ENCODE measurements at regions of chr14 and their contacts with region 1.

Region 1: DNA sequence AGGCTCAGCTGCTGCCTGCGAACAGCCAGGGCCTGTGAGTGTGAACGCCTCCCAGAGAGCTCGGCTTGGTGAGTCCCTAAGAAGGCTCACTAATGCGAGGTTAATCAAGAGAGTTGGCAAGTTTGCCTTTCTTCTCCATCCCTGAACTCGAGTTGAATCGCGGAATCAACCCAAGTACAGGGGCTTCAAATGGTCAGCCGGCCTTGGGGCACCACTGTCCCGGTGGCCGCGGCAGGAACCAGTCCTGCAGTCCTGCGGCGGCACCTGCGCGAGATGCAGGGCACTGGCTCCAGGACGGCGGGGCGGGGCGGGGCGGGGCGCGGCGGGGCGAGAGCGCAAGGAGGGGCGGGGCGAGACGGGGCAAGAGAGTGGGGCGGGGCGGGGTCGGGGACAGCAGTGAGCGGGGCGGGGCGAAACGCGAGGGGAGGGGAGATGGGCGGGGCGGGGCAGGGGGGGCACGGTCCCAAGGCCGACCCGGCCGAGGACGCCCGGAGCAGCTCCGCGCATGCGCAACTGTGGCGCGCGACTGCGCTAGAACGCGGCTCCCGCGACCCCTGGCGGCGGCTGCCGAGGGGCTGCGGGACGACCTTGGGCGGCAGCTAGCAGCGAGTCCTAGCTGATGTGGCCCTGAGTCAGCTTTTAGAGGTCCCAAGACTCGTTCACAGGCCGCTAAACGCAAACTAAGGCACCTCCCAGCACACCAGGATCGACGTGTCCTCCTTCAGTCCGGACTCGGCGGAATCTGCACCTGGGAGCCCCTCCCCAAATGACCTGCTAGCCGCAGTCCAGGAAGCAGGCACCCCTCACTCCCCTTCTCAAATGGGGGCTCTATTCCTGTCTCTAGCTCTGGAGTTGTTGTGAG is 58.0 kb downstream of the TTC7B start:
- DNase-seq: peak; percentile 94
- ATAC-seq: peak; percentile 85
- H3K4me3 Mint-ChIP-seq: peak overlapping the region; percentile 59
- H3K27ac Mint-ChIP-seq: no peak overlapping the region
- H3K4me1 Mint-ChIP-seq: peaks cover 33% of the 10 kb centered on the region
- H3K27me3 Mint-ChIP-seq: peaks cover 10% of the 10 kb centered on the region
- CTCF ChIP-seq: peak; percentile 65

Region 2: DNA sequence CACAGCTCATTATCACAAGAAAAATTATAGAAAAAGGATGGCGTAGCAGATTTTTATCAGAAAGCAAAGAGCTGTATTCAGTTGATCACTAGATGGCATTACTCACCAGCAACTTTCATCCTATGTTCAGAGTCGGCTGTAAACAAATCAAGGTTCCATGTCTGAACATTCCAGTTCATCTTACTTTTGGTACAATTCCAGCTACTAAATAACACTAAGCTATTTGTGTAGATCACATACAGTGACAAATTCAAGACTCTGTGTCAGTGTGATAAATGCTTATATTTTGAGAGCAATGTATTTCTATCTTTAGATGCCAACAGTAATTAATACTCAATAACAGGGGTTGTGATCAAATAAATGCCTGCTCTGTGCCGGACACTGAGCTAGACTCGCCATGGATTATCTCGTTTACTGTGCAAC is 456.6 kb before region 1 on chr14:
- CTCF ChIA-PET with region 1: interaction called, 21 read pairs
- POLR2A ChIA-PET with region 1: no interaction called
- DNase-seq: no peak
- ATAC-seq: no peak
- H3K4me3 Mint-ChIP-seq: no peak overlapping the region
- H3K27ac Mint-ChIP-seq: peak overlapping the region; percentile 71; the same call in 1 of the 2 replicates
- H3K4me1 Mint-ChIP-seq: peaks cover 54% of the 10 kb centered on the region
- H3K27me3 Mint-ChIP-seq: no peaks in the 10 kb centered on the region; the same call in 1 of the 2 replicates
- CTCF ChIP-seq: no peak

Region 3: GRCh38 chr14:90399541-90400444 is 358.5 kb before region 1 on chr14:
- CTCF ChIA-PET with region 1: interaction called, 15 read pairs
- POLR2A ChIA-PET with region 1: no interaction called
- DNase-seq: peak; percentile 85
- ATAC-seq: peak; percentile 62
- H3K4me3 Mint-ChIP-seq: peak overlapping the region; percentile 88
- H3K27ac Mint-ChIP-seq: peak overlapping the region; percentile 36; the same call in 1 of the 2 replicates
- H3K4me1 Mint-ChIP-seq: peaks cover 26% of the 10 kb centered on the region
- H3K27me3 Mint-ChIP-seq: peaks cover 4% of the 10 kb centered on the region; the same call in 1 of the 2 replicates
- CTCF ChIP-seq: peak; percentile 94

Region 4: DNA sequence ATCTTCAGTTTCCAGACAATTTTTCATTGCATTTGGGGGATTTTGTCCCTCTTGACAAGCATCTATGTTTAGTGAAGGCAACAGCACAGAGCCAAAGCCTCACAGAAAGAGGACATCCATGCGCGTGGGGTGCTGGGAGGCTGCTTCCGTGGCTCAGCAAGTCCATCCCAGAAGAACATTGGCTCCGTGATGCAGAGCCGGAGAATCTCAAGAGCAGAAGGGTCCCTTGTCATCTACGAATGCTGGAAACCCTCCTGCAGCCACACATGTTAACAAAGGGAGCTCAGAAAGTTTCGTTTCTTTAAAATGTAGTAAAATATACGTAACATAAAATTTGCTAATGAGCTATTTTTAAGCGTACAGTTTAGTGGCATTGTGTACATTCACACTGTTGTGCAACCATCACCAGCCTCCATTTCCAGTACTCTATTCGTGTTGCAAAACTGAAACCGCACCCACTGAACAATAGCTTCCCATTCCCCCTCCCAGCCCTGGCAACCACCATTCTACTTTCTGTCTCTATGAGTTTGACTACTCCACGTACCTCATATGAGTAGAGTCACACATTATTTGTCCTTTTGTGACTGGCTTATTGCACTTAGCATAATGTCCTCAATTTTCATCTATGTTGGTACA is 128.0 kb before region 1 on chr14:
- CTCF ChIA-PET with region 1: no interaction called
- POLR2A ChIA-PET with region 1: no interaction called
- DNase-seq: no peak
- ATAC-seq: no peak
- H3K4me3 Mint-ChIP-seq: no peak overlapping the region
- H3K27ac Mint-ChIP-seq: no peak overlapping the region
- H3K4me1 Mint-ChIP-seq: peaks cover 30% of the 10 kb centered on the region
- H3K27me3 Mint-ChIP-seq: no peaks in the 10 kb centered on the region
- CTCF ChIP-seq: no peak

Region 5: DNA sequence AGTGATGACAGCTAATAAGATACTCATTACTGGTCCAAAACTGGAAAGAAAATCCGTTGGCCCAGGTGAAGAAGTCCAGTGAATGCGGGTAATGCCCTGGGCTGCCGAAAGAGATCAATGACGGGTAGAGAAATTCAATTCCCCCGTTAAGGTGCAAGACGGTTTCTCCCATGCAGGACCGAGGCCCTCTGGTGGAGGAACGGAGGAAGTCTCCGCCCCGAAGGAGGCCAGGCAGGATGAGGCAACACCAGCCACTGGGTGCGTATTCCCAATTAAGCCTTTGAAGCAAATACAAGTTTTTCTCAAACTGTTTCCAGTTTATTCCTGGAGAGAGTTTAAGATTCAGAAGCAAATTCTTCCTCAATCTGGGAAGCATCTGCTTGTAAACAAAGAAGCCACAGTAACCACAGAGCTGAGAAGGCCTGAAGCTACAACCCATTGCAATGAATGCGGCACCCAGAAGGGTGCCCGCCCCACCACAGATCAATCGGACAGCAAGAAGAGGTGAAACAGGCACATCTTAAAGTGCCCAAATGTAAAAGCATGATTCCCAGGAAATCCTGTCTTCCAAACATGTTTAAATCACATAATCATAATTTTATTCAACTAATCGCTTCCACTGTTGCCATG is 60.6 kb before region 1 on chr14:
- CTCF ChIA-PET with region 1: interaction called, 50 read pairs
- POLR2A ChIA-PET with region 1: no interaction called
- DNase-seq: peak; percentile 87
- ATAC-seq: peak; percentile 93
- H3K4me3 Mint-ChIP-seq: no peak overlapping the region
- H3K27ac Mint-ChIP-seq: peak overlapping the region; percentile 31
- H3K4me1 Mint-ChIP-seq: peaks cover 14% of the 10 kb centered on the region
- H3K27me3 Mint-ChIP-seq: no peaks in the 10 kb centered on the region
- CTCF ChIP-seq: peak; percentile 86

Region 6: DNA sequence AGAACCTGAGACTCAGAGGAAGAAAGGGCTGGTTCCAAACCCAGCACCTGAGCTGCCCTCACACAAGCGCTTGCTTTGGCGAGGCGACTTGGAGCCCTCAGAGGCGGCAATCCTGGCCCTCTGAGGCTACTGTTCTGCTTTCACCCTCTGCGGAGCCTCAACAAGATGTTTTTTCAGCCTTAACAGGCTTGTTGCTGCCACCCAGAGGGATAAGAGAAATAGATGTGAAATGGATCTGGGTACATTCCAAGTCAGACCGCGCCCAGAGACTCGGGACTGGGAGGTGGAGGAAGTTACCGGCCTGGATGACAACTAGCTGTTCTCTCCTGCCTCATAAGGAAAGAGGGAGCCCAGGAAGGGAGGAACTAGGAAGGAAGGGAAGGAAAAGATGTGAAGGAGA is 31.6 kb before region 1 on chr14:
- CTCF ChIA-PET with region 1: interaction called, 19 read pairs
- POLR2A ChIA-PET with region 1: interaction called, 3 read pairs
- DNase-seq: peak; percentile 24
- ATAC-seq: peak; percentile 88
- H3K4me3 Mint-ChIP-seq: no peak overlapping the region
- H3K27ac Mint-ChIP-seq: peak overlapping the region; percentile 75; the same call in 1 of the 2 replicates
- H3K4me1 Mint-ChIP-seq: peaks cover 8% of the 10 kb centered on the region
- H3K27me3 Mint-ChIP-seq: no peaks in the 10 kb centered on the region
- CTCF ChIP-seq: no peak

Region 7: GRCh38 chr14:90785471-90785870 is 27.2 kb after region 1 on chr14:
- CTCF ChIA-PET with region 1: interaction called, 20 read pairs
- POLR2A ChIA-PET with region 1: no interaction called
- DNase-seq: peak; percentile 33
- ATAC-seq: peak; percentile 93
- H3K4me3 Mint-ChIP-seq: no peak overlapping the region
- H3K27ac Mint-ChIP-seq: no peak overlapping the region
- H3K4me1 Mint-ChIP-seq: no peaks in the 10 kb centered on the region
- H3K27me3 Mint-ChIP-seq: no peaks in the 10 kb centered on the region
- CTCF ChIP-seq: no peak

Region 8: DNA sequence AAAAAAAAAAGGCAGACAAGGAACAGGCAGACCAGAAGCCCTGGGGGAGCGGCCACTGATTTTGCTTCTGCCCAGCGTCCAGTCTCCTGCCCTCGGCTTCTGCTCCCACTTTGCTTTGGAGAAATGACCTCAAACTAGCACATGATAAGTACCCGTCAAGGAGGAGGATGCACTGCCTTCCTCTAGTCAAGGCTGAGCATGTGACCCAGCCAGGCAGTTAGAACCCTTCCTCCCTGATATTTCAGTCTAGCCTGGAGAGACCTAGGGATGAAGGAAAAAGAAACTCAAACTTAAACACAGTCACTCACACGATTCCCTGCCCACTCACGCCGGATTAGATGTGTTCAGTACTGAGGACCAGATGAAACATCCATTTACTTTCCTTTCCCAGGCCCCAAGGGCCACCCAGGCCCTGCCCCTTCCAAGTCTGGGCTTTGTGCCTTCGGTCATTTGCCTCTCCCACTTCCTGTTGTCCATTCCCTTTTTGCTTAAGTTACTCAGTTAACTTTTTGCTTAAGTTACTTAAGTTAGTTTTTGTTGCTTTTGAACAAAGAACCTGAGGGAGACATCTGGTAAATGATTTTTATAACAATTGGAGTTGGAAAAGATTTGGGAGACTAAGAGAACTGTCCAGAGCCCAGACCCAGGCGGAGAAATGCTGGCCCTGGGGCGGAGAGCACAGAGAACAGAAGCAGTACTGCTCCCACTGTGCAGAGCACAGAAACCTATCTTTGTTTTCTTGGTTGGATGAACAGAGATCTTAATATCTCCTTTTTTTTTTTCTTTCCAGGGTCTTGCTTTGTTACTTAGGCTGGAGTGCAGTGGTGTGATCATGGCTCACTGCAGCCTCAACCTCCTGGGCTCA is 81.0 kb after region 1 on chr14:
- CTCF ChIA-PET with region 1: no interaction called
- POLR2A ChIA-PET with region 1: no interaction called
- DNase-seq: no peak
- ATAC-seq: no peak
- H3K4me3 Mint-ChIP-seq: no peak overlapping the region
- H3K27ac Mint-ChIP-seq: no peak overlapping the region
- H3K4me1 Mint-ChIP-seq: peaks cover 3% of the 10 kb centered on the region; the same call in 1 of the 2 replicates
- H3K27me3 Mint-ChIP-seq: no peaks in the 10 kb centered on the region; the same call in 1 of the 2 replicates
- CTCF ChIP-seq: no peak